ENCODE measurements at regions of chr21 and their contacts with region 1.

Region 1: GRCh38 chr21:32653311-32653901 is 41.2 kb upstream of the CFAP298 start:
- DNase-seq: peak in 8 of 14 experiments; percentile 4 to 60 (median 22)
- ATAC-seq: peak; percentile 62
- H3K4me3 ChIP-seq: no peak overlapping the region
- H3K4me3 Mint-ChIP-seq: no peak overlapping the region
- H3K27ac ChIP-seq: no peak overlapping the region
- H3K27ac Mint-ChIP-seq: no peak overlapping the region
- H3K4me1 ChIP-seq: no peaks in the 10 kb centered on the region
- H3K4me1 Mint-ChIP-seq: peaks cover 5% of the 10 kb centered on the region
- H3K27me3 ChIP-seq: no peaks in the 10 kb centered on the region
- H3K27me3 Mint-ChIP-seq: no peaks in the 10 kb centered on the region
- CTCF ChIP-seq: peak; percentile 68

Region 2: DNA sequence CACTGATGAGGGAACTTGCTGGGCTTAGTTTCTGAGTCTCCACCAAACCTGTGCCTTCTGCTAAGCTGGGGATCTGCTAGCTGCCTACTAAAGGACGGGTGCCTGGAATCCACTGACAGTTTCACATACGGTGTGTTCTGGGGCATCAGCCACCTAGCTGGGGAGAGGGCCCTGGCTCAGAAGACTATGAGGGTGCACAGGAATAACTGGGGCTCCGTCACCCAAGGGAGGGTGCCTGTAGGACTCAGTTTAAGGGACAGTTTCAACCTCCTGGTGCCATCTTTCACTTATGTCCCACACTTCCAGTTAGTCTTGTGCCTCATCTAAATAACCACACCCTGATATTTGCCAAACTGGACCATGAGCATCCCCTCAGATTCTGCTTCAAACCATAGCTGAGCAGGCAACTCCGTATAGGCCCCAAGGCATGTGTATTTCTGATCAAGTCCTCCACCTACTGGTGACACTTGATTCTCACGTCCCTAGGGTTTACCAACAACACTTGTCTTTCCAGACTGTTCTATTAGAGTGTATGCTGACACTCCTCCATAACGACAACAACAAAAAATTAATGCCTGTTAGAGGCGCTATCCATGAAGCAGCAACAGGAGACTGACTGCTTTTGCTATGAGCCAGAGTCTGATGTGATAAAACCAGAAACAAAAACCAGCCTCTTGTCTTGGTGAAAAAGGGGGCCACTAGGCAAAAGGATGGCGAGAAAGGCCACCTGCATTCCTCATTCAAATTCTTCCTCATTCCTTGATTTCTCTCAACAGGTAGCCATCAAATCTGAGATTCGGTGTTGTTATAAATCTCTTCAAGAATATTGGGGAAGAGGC is 173.1 kb after region 1 on chr21:
- CTCF ChIA-PET with region 1: interaction called, 3 read pairs
- POLR2A ChIA-PET with region 1: no interaction called
- intact Hi-C with region 1: loop called in 1 of 2 experiments (anchors 1 kb)
- DNase-seq: peak in 9 of 14 experiments; percentile 3 to 66 (median 10)
- ATAC-seq: peak; percentile 74
- H3K4me3 ChIP-seq: no peak overlapping the region
- H3K4me3 Mint-ChIP-seq: no peak overlapping the region
- H3K27ac ChIP-seq: no peak overlapping the region
- H3K27ac Mint-ChIP-seq: no peak overlapping the region
- H3K4me1 ChIP-seq: no peaks in the 10 kb centered on the region
- H3K4me1 Mint-ChIP-seq: no peaks in the 10 kb centered on the region
- H3K27me3 ChIP-seq: no peaks in the 10 kb centered on the region
- H3K27me3 Mint-ChIP-seq: peaks cover 8% of the 10 kb centered on the region
- CTCF ChIP-seq: peak; percentile 65

Region 3: DNA sequence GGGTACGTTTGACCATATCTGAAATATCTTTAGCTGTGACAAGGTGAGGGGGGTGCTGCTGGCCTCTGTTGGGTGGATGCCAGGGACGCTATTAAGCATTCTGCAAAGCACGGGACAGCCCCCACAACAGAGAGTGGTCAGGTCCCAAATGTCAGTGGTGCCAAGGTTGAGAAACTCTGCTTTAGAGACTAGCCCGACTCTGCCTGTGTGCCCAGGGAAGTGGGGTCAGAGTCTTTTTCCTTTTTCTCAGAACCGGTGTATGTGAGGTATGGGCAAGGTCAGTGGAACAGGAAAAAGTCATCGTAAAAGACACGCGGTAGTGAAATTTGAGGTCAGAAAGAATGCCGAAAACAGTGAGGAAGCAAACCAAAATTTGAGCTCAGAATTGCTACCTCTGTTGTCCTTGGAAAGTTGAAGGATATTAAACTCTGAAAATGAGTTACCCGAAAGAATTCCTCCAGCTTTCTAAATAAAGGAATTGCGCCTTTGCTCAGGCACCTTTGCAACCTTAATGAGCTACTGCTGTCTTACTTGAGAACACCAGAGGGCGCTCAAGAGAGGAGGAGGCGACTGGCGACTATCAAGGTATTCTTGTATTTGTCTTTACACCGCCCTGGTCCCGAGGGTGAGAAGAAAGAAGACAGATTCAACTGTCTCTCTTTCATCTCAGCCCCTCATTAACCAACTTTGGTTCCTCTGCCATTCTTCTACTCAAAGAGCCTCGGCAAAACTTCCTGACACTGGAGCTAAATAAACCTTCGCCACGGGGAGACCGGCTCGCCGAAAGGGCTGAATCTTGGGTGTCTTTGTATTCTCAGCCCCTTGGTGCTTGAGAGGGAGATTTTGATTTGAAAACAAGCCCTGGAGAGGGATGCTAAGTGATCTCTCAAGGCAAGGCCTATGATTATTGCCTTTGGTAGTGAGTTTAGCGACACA is 286.9 kb after region 1 on chr21:
- CTCF ChIA-PET with region 1: no interaction called
- POLR2A ChIA-PET with region 1: no interaction called
- intact Hi-C with region 1: no loop called
- DNase-seq: peak in 12 of 14 experiments; percentile 7 to 79 (median 20)
- ATAC-seq: peak; percentile 61
- H3K4me3 ChIP-seq: no peak overlapping the region
- H3K4me3 Mint-ChIP-seq: no peak overlapping the region
- H3K27ac ChIP-seq: no peak overlapping the region
- H3K27ac Mint-ChIP-seq: no peak overlapping the region
- H3K4me1 ChIP-seq: no peaks in the 10 kb centered on the region
- H3K4me1 Mint-ChIP-seq: no peaks in the 10 kb centered on the region
- H3K27me3 ChIP-seq: no peaks in the 10 kb centered on the region
- H3K27me3 Mint-ChIP-seq: no peaks in the 10 kb centered on the region
- CTCF ChIP-seq: peak; percentile 82

Region 4: GRCh38 chr21:33451634-33452071 is 798.2 kb after region 1 on chr21:
- CTCF ChIA-PET with region 1: no interaction called
- POLR2A ChIA-PET with region 1: no interaction called
- intact Hi-C with region 1: loop called in 1 of 2 experiments (anchors 10 kb)
- DNase-seq: no peak
- ATAC-seq: no peak
- H3K4me3 ChIP-seq: no peak overlapping the region
- H3K4me3 Mint-ChIP-seq: no peak overlapping the region
- H3K27ac ChIP-seq: no peak overlapping the region
- H3K27ac Mint-ChIP-seq: no peak overlapping the region
- H3K4me1 ChIP-seq: no peaks in the 10 kb centered on the region
- H3K4me1 Mint-ChIP-seq: no peaks in the 10 kb centered on the region
- H3K27me3 ChIP-seq: no peaks in the 10 kb centered on the region
- H3K27me3 Mint-ChIP-seq: no peaks in the 10 kb centered on the region
- CTCF ChIP-seq: no peak